ENCODE measurements at regions of chr6 and their contacts with region 1.

Region 1: DNA sequence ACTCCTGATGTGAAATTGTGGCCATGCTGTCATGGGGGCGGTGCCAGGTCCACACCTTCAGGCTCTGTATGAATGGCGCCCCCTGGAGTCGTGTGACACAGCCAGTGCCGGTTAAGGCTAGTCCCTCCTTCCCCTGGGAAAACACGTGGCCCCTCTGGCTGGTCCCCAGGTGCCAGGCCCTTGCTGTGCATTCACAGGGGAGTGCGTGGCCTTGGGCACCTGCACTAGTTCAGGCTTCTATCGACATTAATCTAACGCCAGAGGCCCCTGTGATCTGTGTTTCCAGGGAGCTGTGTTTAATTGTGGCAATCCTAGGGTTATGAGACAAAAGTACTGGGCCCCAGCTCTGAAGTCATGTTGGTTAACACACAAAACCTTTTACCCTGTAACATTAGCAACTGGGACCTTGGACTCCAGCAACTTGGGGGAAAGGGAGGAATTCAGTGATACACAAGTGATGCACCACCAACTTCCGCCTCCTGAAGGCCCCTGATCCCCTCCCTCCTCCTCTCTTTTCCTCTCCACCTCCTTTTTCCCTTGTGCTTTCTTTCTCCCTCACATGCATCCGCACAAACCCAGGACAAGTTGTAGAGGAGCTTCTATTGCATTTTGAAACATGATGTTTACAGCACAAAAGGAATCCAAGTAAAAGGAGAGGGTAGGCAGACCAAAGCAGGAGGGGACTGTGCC is 74.0 kb downstream of the SSR1 start:
- DNase-seq: peak; percentile 88 to 89
- ATAC-seq: peak; percentile 66 to 90 (median 85)
- H3K4me3 ChIP-seq: no peak overlapping the region
- H3K27ac ChIP-seq: peak overlapping the region in 8 of 10 donors; percentile 10 to 65 (median 34)
- H3K4me1 ChIP-seq: peaks cover 5 to 65% (median 42%) of the 10 kb centered on the region in 9 donors
- H3K27me3 ChIP-seq: no peaks in the 10 kb centered on the region
- CTCF ChIP-seq: peak; percentile 51 to 78 (median 71)

Region 2: GRCh38 chr6:6676910-6677441 is 562.1 kb before region 1 on chr6:
- intact Hi-C with region 1: loop called in 9 of 10 experiments (anchors 1 to 10 kb)
- DNase-seq: peak; percentile 66 to 81
- ATAC-seq: peak; percentile 63 to 91 (median 86)
- H3K4me3 ChIP-seq: no peak overlapping the region
- H3K27ac ChIP-seq: peak overlapping the region; percentile 14 to 77 (median 63)
- H3K4me1 ChIP-seq: peaks cover 4 to 51% (median 27%) of the 10 kb centered on the region in 9 donors
- H3K27me3 ChIP-seq: no peaks in the 10 kb centered on the region
- CTCF ChIP-seq: peak; percentile 91 to 98 (median 96)

Region 3: DNA sequence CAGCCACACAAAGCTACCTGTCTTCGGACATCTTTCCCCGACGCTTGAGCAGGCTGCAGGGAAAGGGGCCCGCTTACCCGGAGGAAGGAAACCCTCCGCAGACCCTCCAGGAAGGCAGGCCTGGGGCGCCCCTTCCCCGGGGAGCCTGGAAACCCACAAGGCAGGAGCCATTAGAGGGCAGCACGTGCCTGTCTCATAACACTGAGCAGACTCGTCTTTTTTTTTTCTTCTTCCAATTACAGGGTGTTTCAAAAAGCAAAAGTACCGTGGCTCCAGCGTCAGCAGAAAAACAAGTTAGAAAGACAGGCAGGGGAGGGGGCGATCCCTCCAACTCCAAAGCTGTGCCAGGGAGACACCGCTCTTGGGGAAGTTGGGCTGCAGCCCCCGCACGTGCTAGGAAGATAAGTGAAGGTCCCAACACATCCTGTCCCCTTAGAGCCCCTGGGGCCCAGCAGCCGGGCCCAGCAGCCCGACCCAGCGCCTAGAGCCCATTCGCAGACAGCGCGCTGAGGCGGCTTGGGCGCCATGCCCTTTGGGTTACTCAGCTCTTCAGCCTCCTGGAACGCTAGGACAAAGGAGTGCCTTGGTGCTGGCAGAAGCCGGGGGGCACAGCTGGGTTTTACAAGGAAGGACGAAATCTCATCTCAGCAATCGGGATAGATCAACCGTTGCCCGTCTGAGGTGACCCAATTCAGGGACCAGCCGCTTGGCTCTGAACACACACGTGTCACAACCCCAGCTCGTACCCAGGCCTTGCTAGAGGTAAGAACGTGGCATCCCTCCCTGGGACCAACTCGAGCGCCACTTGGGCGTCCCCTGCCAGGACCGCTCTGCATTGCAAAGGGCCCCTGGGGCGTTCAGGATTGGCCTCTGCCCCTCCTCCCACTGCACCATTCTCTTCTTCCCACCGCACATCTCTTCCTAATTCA is 514.2 kb before region 1 on chr6:
- intact Hi-C with region 1: loop called (anchors 1 to 10 kb)
- DNase-seq: peak; percentile 66 to 79
- ATAC-seq: peak; percentile 86 to 92 (median 89)
- H3K4me3 ChIP-seq: peak overlapping the region; percentile 15 to 55 (median 44)
- H3K27ac ChIP-seq: peak overlapping the region; percentile 79 to 98 (median 90)
- H3K4me1 ChIP-seq: peaks cover 7 to 49% (median 30%) of the 10 kb centered on the region in 9 donors
- H3K27me3 ChIP-seq: no peaks in the 10 kb centered on the region
- CTCF ChIP-seq: peak; percentile 50 to 90 (median 68)

Region 4: DNA sequence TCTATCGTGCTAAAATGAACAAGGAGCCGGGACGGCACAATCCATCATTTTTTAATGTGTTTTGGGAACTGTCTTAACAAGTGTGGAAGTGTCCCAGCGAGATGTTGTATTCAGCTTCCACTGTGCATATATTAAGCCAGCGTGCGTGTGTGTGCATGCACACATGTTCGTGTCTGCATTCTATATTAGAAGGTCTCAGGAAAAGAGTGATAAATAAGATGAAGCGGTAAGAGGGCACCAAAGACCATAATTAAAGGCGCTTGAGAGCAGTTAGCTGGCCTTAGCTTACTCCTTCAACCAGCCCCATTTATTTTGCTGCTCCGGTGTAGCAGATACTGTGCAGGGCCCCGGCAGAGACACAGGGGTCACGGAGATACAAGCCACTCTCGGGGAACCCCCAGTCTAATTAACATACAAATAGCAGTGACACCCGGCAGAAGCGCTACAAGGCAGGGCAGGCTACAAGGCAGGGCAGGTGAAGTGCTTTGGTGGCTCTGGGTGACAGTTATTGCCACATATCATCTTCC is 337.8 kb before region 1 on chr6:
- intact Hi-C with region 1: loop called in 4 of 10 experiments (anchors 10 kb)
- DNase-seq: no peak
- ATAC-seq: peak in 3 of 8 donors; percentile 39 to 66 (median 60)
- H3K4me3 ChIP-seq: no peak overlapping the region
- H3K27ac ChIP-seq: no peak overlapping the region
- H3K4me1 ChIP-seq: peaks cover 0 to 18% (median 0%) of the 10 kb centered on the region in 9 donors
- H3K27me3 ChIP-seq: no peaks in the 10 kb centered on the region
- CTCF ChIP-seq: peak in 2 of 9 donors; percentile 13

Region 5: GRCh38 chr6:6969761-6970223 is 269.3 kb before region 1 on chr6:
- intact Hi-C with region 1: loop called in 1 of 10 experiments (anchors 10 kb)
- DNase-seq: no peak
- ATAC-seq: no peak
- H3K4me3 ChIP-seq: no peak overlapping the region
- H3K27ac ChIP-seq: no peak overlapping the region
- H3K4me1 ChIP-seq: no peaks in the 10 kb centered on the region
- H3K27me3 ChIP-seq: no peaks in the 10 kb centered on the region
- CTCF ChIP-seq: no peak

Region 6: DNA sequence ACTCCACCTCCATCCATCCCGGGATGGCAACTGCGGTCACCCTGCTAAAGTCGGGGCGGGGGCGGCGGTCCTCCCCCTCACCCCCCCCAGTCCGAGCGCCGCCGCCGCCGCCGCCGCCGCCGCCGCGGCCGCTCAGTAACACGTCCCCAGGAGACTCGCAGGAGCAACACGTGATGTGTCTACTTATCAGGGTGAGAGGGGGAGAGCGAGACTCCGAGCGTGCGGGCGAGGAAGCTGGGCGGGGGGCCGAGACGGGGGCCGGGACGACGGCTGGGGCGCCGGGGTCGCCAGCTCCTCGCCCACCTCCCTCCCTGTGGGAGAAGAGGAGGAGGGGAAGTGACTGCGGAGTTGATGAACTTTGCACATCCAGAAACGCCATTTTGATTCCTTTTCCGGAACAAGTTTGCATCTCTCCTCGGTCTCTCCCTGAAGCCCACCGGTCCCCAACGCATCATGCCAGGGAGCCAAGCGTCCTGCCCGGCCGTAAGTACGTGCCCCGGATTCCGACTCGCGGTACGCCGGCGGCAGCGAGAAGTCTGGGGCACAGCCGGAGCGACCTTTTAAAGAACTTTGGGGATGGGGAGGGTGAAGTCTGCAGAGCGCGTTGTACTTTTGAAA is 131.4 kb before region 1 on chr6 and contains the start of gene RREB1:
- intact Hi-C with region 1: loop called in 6 of 10 experiments (anchors 1 to 10 kb)
- DNase-seq: peak; percentile 62 to 70
- ATAC-seq: peak; percentile 66 to 85 (median 75)
- H3K4me3 ChIP-seq: peak within 1 kb of the TSS; percentile 71 to 99 (median 84)
- H3K27ac ChIP-seq: peak within 1 kb of the TSS; percentile 86 to 98 (median 95)
- H3K4me1 ChIP-seq: peaks cover 0 to 46% (median 34%) of the 10 kb centered on the region in 9 donors
- H3K27me3 ChIP-seq: no peaks in the 10 kb centered on the region
- CTCF ChIP-seq: no peak
- total RNA-seq, gene RREB1: 32.2 to 47.1 (median 36.8) TPM

Measured in heart right ventricle (tissue), 16 donors.